Activated T-helper 1 cell treated with anti-CD3 and anti-CD28 coated beads, Interleukin-12 subunit alpha, Interleukin-12 subunit beta, Interleukin-2, Interleukin-4 antibody, amounts not matched to agents 30 ng/mL and 10 ng/mL and 1 ng/mL, durations not matched to agents 14 hours and 24 hours and 36 hours (primary cell): ENCODE measurements at regions of chr5 and their contacts with region 1.

Region 1: DNA sequence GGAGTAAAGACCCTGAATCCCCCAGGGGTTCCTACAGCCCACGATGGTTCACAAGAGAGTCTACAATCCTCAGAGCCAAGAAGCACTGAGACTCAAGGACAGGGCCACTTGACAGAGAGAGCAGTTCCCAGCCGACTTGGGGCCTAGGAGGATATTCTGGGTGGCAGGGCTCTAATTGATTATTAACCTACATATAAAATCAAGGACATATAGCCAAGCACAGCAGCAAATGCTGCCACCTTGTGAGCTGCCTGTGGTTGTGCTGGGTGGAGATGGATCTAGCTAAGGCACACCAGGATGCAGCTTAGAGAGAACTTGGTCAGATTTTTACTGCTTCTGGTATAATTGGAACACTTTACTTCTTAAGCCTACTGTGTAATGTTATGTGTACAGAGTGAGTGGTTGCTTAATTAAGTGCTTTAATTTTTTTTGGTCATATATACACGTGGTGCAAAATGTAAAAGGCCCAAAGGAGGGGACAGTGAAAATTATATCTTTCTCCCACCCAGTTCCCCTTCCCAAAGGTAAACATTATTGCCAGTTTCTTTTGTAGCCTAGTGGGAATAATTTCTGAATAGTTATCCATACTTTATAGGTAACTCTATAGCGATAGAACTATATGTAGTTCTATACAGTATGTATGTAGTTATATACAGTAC is 78.8 kb downstream of the F2RL2 start:
- DNase-seq: peak; percentile 41
- H3K4me3 Mint-ChIP-seq: peak overlapping the region; percentile 79
- H3K27ac Mint-ChIP-seq: peak overlapping the region; percentile 98
- H3K4me1 Mint-ChIP-seq: peaks cover 93% of the 10 kb centered on the region
- H3K27me3 Mint-ChIP-seq: no peaks in the 10 kb centered on the region

Region 2: DNA sequence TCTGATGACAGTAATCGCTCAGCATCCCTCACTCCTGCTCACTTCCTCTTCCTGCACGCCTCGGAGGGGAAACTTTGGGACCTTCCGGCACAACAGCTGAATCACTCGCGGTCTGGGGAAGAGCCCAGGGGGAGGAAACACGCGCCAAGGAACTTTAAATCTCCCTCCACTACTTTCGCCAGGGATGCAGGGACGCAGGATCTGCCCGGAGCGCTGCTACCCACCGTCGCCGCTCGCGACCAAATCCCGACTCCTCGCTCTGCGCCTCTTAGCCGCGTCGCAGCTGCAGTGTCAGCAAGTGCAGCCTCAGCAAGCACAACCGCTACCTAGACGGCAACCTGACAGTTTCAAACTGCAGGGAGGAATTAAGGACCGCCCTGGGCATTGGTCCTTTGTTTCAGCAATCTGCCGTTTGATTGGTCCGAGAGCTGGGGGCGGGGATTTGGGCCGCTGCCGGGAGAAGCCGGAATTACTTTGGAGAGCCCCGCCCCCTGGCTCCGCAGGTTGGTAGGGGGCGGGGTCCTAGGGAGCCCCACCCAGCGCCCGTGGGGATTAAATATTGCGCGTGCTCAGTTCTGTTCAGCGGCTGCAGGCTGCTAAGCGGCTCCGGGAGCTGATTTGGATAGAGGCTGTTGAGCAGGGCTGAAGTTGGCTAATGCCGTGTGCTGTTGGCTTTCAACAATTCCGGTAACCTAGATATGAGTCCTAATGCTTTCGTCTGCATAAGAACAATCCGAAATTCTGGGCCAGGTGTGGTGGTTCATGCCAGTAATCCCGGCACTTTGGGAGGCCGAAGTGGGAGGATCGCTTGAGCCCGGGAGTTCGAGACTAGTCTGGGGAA is 827.1 kb before region 1 on chr5 and contains the start of gene POC5:
- intact Hi-C with region 1: loop called (anchors 5 kb)
- DNase-seq: peak; percentile 98
- H3K4me3 Mint-ChIP-seq: peak within 1 kb of the TSS; percentile 98
- H3K27ac Mint-ChIP-seq: peak within 1 kb of the TSS; percentile 100
- H3K4me1 Mint-ChIP-seq: peaks cover 34% of the 10 kb centered on the region
- H3K27me3 Mint-ChIP-seq: peaks cover 3% of the 10 kb centered on the region
- total RNA-seq, gene POC5: 20.7 and 24.2 TPM in 2 replicates

Region 3: DNA sequence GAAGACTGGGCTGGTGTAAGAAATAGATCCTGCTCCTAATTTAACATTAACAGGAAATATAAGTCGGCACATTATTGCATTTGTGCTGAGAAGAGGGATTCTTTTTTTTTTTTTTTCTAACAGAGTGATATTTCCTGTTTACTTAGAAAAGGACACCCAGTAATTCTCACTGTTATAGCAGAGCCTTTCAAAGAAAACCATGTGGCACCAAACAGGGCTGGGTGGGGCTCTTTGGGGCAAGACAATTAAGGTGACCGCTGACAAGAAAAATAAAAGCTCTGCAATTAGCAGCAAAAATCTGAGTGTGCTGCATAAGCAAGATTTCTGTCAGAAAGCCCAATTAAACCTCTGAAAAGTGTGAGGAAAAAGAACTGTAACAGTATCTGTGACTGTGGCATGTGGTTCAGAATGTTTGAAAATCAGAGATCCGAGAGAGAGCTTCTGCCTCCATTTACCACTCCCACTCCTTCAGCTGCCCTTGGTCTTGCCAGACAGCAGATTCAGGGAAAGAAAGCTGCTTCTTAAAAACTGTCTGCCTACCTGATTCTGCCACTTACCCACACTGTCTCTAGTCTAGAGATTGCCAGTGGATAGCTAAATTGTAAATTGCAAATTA is 218.4 kb before region 1 on chr5:
- intact Hi-C with region 1: loop called (anchors 2 kb)
- DNase-seq: peak; percentile 50
- H3K4me3 Mint-ChIP-seq: peak overlapping the region; percentile 44
- H3K27ac Mint-ChIP-seq: peak overlapping the region; percentile 84
- H3K4me1 Mint-ChIP-seq: peaks cover 63% of the 10 kb centered on the region
- H3K27me3 Mint-ChIP-seq: no peaks in the 10 kb centered on the region

Region 4: GRCh38 chr5:76443066-76443800 is 101.2 kb before region 1 on chr5:
- intact Hi-C with region 1: no loop called
- DNase-seq: no peak
- H3K4me3 Mint-ChIP-seq: no peak overlapping the region
- H3K27ac Mint-ChIP-seq: no peak overlapping the region
- H3K4me1 Mint-ChIP-seq: peaks cover 9% of the 10 kb centered on the region
- H3K27me3 Mint-ChIP-seq: no peaks in the 10 kb centered on the region

Region 5: GRCh38 chr5:76473661-76474060 is 70.7 kb before region 1 on chr5:
- intact Hi-C with region 1: loop called (anchors 1 kb)
- DNase-seq: peak; percentile 55
- H3K4me3 Mint-ChIP-seq: peak overlapping the region; percentile 47
- H3K27ac Mint-ChIP-seq: peak overlapping the region; percentile 82
- H3K4me1 Mint-ChIP-seq: peaks cover 73% of the 10 kb centered on the region
- H3K27me3 Mint-ChIP-seq: no peaks in the 10 kb centered on the region

Region 6: GRCh38 chr5:76582230-76583162 is 38.1 kb after region 1 on chr5:
- intact Hi-C with region 1: loop called (anchors 1 kb)
- DNase-seq: no peak
- H3K4me3 Mint-ChIP-seq: no peak overlapping the region
- H3K27ac Mint-ChIP-seq: no peak overlapping the region
- H3K4me1 Mint-ChIP-seq: peaks cover 33% of the 10 kb centered on the region
- H3K27me3 Mint-ChIP-seq: no peaks in the 10 kb centered on the region

Region 7: DNA sequence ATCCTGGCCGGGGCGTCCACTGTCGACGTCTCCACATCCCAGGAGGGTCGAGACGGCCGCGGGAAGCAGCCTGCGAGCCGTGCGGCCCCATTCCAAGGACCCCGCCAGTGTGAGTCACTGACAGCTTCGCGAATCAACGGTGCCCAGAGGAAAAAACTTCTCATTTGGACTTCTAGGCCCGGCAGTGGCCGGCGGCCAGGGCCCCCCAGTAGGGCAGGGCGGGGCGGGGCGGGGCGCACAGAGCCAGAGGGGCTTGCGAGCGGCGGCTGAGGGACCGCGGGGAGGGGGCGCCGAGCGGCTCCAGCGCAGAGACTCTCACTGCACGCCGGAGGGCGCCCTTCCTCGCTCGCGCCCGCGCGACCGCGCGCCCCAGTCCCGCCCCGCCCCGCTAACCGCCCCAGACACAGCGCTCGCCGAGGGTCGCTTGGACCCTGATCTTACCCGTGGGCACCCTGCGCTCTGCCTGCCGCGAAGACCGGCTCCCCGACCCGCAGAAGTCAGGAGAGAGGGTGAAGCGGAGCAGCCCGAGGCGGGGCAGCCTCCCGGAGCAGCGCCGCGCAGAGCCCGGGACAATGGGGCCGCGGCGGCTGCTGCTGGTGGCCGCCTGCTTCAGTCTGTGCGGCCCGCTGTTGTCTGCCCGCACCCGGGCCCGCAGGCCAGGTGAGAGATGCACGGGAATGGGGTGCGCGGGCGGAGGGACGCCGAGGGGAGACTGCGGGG is 171.5 kb after region 1 on chr5 and contains the start of gene F2R:
- intact Hi-C with region 1: loop called (anchors 5 kb)
- DNase-seq: no peak
- H3K4me3 Mint-ChIP-seq: peak within 1 kb of the TSS; percentile 85
- H3K27ac Mint-ChIP-seq: peak within 1 kb of the TSS; percentile 34
- H3K4me1 Mint-ChIP-seq: peaks cover 39% of the 10 kb centered on the region
- H3K27me3 Mint-ChIP-seq: peaks cover 19% of the 10 kb centered on the region
- total RNA-seq, gene F2R: 3.9 and 4.0 TPM in 2 replicates

Region 8: GRCh38 chr5:77030097-77031071 is 486.0 kb after region 1 on chr5 and contains the start of gene AGGF1:
- intact Hi-C with region 1: loop called (anchors 5 kb)
- DNase-seq: peak; percentile 87
- H3K4me3 Mint-ChIP-seq: peak within 1 kb of the TSS; percentile 90
- H3K27ac Mint-ChIP-seq: peak within 1 kb of the TSS; percentile 86
- H3K4me1 Mint-ChIP-seq: peaks cover 29% of the 10 kb centered on the region
- H3K27me3 Mint-ChIP-seq: peaks cover 4% of the 10 kb centered on the region
- total RNA-seq, gene AGGF1: 26.2 and 30.4 TPM in 2 replicates